BJ (cell line): ENCODE measurements at regions of chr1 and their contacts with region 1.

Region 1: DNA sequence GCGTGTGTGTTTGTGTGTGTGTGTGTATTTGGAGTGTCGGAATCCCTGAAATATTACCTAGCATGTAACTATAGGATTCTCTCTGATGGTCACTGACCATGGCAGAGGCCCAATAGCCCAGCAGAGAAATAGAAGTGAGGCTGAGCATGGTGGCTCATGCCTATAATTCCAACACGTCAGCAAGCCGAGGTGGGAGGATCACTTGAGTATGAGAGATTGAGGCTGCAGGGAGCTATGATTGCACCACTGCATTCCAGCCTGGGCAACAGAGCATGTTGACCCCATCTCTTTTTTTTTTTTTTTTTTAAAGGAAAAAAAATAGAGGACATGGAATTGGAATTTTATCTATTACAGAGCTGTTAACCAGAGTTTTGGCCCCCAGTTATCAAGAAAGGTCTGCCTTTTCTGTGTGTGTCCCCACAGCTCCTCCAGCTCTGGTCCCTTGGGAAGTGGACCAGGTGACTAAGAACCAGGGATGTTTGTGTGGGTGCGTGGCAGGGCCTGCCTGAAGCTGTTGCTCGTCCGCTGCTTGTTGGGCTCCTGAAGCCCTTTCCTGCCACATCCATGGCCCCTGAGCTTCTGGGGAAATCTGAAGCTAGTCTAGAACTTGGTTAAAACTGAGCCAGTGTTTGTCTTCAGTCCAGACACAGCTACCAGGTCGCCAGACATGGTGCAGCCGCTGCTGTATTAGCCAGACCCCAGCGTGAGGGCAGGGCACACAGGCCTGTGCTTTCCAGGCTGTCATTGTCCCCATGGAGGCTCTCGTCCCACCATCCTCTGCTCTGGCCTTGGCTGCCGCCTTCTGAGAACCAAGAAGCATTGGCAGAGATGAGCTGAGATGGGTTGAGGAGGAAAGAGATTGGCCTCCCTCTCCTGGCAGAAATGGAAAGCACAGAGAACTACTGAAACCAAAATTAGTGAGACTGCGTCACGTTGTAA is 25.5 kb downstream of the CAPN9 start:
- DNase-seq: no peak
- H3K4me3 ChIP-seq: no peak overlapping the region
- H3K27me3 ChIP-seq: peaks cover 3% of the 10 kb centered on the region; the same call in 1 of the 2 replicates
- CTCF ChIP-seq: peak; percentile 77

Region 2: DNA sequence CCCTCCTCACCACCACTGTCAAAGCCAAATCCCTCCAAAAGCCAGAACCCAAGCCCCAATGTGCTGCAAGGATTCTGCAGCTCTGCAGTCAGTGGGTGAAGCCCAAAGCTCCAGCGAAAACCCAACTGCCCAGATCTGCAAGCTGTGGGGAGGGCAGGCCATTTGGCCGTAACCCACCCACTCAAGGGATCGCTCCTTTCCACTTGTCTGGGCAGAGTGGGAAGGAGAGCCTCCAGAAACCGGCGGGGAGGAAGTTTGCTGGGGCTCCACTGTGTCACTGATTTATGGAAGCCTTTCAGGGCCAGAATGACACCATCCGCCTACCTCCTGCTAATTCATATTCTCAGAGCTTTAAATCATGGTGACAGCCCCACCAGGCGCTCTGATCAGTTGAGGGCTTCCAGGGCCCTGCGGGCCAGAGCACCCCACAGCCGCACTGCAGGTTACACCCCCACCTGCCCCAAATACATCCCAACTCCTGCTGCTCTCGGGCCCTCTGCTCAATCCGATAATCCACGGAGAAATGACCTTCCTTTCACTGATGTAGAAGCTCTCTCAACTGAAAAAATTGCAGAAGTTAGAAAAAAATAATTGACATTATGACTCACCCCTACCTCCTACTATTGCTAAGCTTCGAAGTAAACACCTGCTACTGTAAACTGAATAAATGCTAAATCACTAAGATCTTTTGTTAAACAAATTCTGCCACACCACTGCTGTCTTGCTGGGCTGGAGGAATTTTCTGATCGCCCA is 1542.4 kb before region 1 on chr1:
- CTCF ChIA-PET with region 1: no interaction called
- POLR2A ChIA-PET with region 1: no interaction called
- DNase-seq: no peak
- H3K4me3 ChIP-seq: no peak overlapping the region
- H3K27me3 ChIP-seq: peaks cover 5% of the 10 kb centered on the region
- CTCF ChIP-seq: no peak

Region 3: GRCh38 chr1:230487773-230488428 is 284.8 kb before region 1 on chr1:
- CTCF ChIA-PET with region 1: no interaction called
- POLR2A ChIA-PET with region 1: no interaction called
- DNase-seq: no peak
- H3K4me3 ChIP-seq: no peak overlapping the region
- H3K27me3 ChIP-seq: no peaks in the 10 kb centered on the region
- CTCF ChIP-seq: no peak

Region 4: DNA sequence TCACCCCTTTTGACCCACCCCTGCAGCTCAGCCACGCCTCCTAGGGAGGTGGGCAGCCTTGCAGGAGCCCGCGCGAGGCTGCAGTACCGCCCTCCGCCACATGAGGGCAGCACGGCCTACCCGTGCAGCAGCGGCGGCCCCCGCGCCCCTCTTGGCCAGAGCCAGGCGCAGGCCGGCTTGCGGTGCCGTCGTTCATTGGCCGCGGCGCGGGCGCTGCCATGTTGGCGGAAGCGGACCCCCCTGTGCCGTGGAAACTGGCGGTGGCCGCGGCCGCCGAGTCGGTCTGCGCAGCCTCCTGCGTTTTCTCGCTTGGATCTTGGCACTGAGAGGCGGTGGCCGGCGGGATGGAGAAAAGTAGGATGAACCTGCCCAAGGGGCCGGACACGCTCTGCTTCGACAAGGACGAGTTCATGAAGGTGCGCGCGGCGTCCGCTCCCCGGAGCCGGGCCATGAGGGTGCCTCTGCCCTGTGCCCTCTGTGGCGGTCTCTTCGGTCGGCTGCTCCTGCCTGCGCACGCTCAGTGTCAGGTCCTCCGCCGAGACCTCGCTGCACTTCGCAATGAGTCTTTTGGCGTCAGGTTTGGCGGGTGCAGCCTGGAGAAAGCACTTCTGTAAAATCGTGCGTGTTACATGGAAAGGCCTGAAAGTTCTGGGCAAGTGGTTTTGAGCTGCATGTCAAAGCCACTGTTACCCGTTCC is 130.3 kb before region 1 on chr1 and contains the start of gene COG2:
- CTCF ChIA-PET with region 1: interaction called, 24 read pairs
- POLR2A ChIA-PET with region 1: interaction called, 3 read pairs
- DNase-seq: peak; percentile 39
- H3K4me3 ChIP-seq: peak within 1 kb of the TSS; percentile 72
- H3K27me3 ChIP-seq: peaks cover 5% of the 10 kb centered on the region; the same call in 1 of the 2 replicates
- CTCF ChIP-seq: peak; percentile 93
- polyA plus RNA-seq, gene COG2: 12.0 and 16.3 TPM in 2 replicates

Region 5: DNA sequence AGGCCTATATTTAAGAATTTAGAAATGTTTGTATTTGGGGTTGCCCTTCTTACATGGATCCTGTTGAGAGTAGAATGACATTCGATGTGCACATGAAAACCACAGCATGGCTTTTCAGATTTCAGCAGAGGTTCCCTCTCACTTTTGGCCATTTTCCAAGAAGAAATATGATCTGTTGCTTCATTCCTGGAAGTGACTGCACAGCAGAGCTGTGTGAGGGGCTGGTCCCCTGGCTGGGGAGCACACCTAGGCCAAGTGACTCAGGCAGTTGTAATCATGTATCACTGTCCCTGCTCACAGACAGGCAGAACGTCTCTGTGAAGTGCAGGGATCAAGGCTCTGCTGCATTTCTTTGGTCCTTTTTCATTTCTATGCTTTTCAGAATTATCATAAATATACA is 91.1 kb before region 1 on chr1:
- CTCF ChIA-PET with region 1: interaction called, 11 read pairs
- POLR2A ChIA-PET with region 1: no interaction called
- DNase-seq: peak; percentile 19
- H3K4me3 ChIP-seq: no peak overlapping the region
- H3K27me3 ChIP-seq: no peaks in the 10 kb centered on the region
- CTCF ChIP-seq: no peak